ENCODE measurements at regions of chr6 and their contacts with region 1.

Region 1: DNA sequence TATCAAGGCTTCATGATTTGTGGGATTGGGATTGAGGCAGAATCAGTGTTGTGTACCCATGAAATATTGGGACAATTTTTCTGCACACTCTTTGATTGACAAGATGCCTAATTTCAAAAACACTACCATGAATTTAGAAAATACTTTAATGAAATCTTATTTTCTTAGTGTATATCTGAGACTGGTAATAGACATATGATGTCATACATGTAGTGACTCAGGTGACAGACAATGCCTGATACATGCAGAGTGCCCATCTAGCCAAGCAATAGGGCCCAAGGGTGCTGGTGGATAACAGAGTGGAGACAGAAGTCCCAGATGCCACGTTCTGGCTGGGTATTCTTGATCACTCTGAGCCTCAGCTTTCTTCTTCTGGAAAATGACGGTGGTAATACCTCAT is 279.6 kb upstream of the ARID1B start:
- DNase-seq: no peak
- H3K4me3 ChIP-seq: no peak overlapping the region
- H3K27ac ChIP-seq: no peak overlapping the region
- H3K4me1 ChIP-seq: no peaks in the 10 kb centered on the region
- H3K27me3 ChIP-seq: no peaks in the 10 kb centered on the region
- CTCF ChIP-seq: no peak
- EP300 ChIP-seq: no peak
- POLR2A ChIP-seq: no peak
- RAD21 ChIP-seq: no peak

Region 2: DNA sequence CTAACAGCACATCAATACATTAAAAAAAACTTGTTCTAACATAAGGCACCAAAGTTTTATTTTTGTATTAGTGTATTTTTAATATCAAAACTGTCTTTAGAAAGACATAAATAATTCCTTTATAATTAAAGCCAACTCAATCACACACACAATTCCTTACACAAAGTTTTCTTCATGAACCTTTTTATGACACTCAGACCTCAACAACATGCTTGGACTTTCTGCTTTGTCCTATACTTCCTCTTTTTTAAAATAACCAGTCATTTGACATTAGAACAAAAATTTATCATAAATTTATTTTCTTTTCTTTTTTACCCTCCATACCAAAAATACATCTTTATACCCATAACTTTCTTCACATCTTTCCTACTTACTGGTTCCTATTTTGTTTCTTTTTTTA is 12.5 kb before region 1 on chr6:
- CTCF ChIA-PET with region 1: no interaction called
- POLR2A ChIA-PET with region 1: no interaction called
- DNase-seq: no peak
- H3K4me3 ChIP-seq: no peak overlapping the region
- H3K27ac ChIP-seq: no peak overlapping the region
- H3K4me1 ChIP-seq: no peaks in the 10 kb centered on the region
- H3K27me3 ChIP-seq: no peaks in the 10 kb centered on the region
- CTCF ChIP-seq: no peak
- EP300 ChIP-seq: no peak
- POLR2A ChIP-seq: no peak
- RAD21 ChIP-seq: no peak

Region 3: GRCh38 chr6:156508923-156509322 is 11.3 kb after region 1 on chr6:
- CTCF ChIA-PET with region 1: interaction called, 11 read pairs
- POLR2A ChIA-PET with region 1: no interaction called
- DNase-seq: no peak
- H3K4me3 ChIP-seq: no peak overlapping the region
- H3K27ac ChIP-seq: no peak overlapping the region
- H3K4me1 ChIP-seq: no peaks in the 10 kb centered on the region
- H3K27me3 ChIP-seq: no peaks in the 10 kb centered on the region
- CTCF ChIP-seq: no peak
- EP300 ChIP-seq: no peak
- POLR2A ChIP-seq: no peak
- RAD21 ChIP-seq: no peak

Region 4: DNA sequence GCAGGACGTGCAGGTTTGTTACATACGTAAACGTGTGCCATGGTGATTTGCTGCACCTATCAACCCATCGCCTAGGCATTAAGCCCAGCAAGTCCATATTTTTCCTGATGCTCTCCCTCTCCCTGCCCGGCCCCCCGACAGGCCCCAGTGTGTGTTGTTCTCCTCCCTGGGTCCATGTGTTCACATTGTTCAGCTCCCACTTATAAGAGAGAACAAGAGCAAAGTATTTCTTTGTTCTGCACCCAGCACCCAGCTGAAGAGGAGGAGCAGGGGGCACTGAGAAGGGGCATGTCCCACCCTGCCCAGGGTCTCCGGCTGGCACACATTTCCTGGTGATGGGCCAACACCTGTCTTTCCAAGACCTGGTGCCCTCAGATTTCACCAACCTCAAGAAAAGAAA is 28.5 kb after region 1 on chr6:
- CTCF ChIA-PET with region 1: no interaction called
- POLR2A ChIA-PET with region 1: no interaction called
- DNase-seq: no peak
- H3K4me3 ChIP-seq: no peak overlapping the region
- H3K27ac ChIP-seq: no peak overlapping the region
- H3K4me1 ChIP-seq: no peaks in the 10 kb centered on the region
- H3K27me3 ChIP-seq: no peaks in the 10 kb centered on the region
- CTCF ChIP-seq: no peak
- EP300 ChIP-seq: no peak
- POLR2A ChIP-seq: no peak
- RAD21 ChIP-seq: no peak

Measured in H1 (cell line).